Activated naive CD4-positive, alpha-beta T cell treated with anti-CD3 and anti-CD28 coated beads for 36 hours (primary cell): ENCODE measurements at regions of chr11 and their contacts with region 1.

Region 1: GRCh38 chr11:128575961-128576350 is 11.4 kb downstream of the ETS1 start:
- DNase-seq: peak; percentile 45
- H3K4me3 Mint-ChIP-seq: no peak overlapping the region
- H3K27ac Mint-ChIP-seq: no peak overlapping the region
- H3K4me1 Mint-ChIP-seq: peaks cover 70% of the 10 kb centered on the region
- H3K27me3 Mint-ChIP-seq: no peaks in the 10 kb centered on the region

Region 2: GRCh38 chr11:128530118-128531074 is 45.6 kb before region 1 on chr11:
- CTCF ChIA-PET with region 1: no interaction called
- intact Hi-C with region 1: loop called (anchors 1 kb)
- DNase-seq: no peak
- H3K4me3 Mint-ChIP-seq: no peak overlapping the region
- H3K27ac Mint-ChIP-seq: no peak overlapping the region
- H3K4me1 Mint-ChIP-seq: peaks cover 69% of the 10 kb centered on the region
- H3K27me3 Mint-ChIP-seq: no peaks in the 10 kb centered on the region